ENCODE measurements at regions of chr3 and their contacts with region 1.

Region 1: DNA sequence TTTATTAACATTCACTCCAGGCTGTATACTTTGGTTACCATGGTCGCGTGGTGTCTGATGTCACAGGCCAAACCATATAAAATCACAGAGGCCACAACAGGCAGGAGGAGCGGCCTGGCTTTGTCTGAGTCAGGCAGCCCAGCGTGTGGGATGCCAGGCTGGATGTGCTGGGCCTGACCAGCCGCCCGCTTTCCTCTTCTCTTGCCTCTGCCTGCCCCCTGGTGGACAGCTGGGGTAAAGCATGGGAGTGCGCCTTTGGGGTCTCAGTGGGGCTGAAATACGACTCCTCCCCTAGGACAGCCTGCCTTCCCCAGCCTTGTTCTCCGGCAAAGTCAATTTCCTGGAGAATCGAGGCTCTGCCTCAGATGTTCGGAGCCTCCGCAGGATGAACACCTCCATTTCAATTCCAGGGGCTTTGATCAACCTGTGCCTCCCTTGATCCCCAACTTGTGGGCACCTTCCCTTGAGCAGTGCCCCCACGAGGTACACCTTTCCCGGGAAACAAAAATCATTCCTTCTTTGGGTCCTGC is 78.2 kb downstream of the CCNL1 start:
- DNase-seq: peak; percentile 85
- H3K4me3 ChIP-seq: no peak overlapping the region
- H3K27ac ChIP-seq: no peak overlapping the region
- H3K4me1 ChIP-seq: no peaks in the 10 kb centered on the region
- H3K27me3 ChIP-seq: no peaks in the 10 kb centered on the region
- CTCF ChIP-seq: peak; percentile 94 to 96
- POLR2A ChIP-seq: no peak

Region 2: DNA sequence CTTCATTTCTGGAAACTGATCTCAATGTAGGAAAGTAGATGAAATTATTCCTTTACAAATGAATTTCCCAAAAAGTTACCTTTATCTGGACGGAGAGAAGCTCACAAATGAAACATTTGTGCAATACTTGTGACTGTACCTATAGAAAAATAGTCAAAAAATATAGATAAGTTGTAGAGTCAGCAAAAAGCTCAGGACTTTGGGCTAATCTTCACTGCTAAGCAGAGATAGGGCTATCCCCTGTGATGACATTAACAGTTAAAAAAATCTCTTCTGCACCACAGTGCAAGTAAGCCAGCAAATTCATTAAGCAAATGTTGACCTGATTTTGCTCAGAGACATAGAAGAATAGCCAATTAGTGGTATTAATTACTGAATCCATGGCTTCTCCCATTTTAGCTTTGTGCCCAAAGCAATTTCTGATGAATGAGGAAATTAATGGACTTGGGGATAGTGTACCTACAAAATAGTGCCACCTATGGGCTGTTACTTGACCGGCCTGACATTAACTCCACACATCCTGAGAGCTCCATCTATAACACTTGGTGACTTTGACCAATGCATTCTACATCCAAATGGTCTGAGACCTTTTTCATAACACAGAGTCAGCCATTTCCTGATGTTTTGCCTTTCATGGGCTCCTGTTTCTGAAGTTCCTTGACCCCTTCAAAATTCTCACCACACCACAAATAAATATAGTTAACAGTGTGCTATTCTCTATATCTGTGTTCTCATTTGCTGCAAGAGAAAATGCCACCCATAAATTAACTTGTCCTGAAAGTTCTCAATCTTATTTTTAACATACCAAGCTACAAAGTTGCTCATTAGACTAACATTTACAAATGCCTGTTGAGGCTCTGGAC is 631.8 kb before region 1 on chr3:
- CTCF ChIA-PET with region 1: interaction called, 5 read pairs
- POLR2A ChIA-PET with region 1: no interaction called
- dilution Hi-C with region 1: no loop called
- intact Hi-C with region 1: loop called (anchors 2 kb)
- DNase-seq: peak; percentile 67
- H3K4me3 ChIP-seq: no peak overlapping the region
- H3K27ac ChIP-seq: no peak overlapping the region
- H3K4me1 ChIP-seq: peaks cover 5% of the 10 kb centered on the region
- H3K27me3 ChIP-seq: no peaks in the 10 kb centered on the region
- CTCF ChIP-seq: peak; percentile 58 to 59
- POLR2A ChIP-seq: no peak

Region 3: DNA sequence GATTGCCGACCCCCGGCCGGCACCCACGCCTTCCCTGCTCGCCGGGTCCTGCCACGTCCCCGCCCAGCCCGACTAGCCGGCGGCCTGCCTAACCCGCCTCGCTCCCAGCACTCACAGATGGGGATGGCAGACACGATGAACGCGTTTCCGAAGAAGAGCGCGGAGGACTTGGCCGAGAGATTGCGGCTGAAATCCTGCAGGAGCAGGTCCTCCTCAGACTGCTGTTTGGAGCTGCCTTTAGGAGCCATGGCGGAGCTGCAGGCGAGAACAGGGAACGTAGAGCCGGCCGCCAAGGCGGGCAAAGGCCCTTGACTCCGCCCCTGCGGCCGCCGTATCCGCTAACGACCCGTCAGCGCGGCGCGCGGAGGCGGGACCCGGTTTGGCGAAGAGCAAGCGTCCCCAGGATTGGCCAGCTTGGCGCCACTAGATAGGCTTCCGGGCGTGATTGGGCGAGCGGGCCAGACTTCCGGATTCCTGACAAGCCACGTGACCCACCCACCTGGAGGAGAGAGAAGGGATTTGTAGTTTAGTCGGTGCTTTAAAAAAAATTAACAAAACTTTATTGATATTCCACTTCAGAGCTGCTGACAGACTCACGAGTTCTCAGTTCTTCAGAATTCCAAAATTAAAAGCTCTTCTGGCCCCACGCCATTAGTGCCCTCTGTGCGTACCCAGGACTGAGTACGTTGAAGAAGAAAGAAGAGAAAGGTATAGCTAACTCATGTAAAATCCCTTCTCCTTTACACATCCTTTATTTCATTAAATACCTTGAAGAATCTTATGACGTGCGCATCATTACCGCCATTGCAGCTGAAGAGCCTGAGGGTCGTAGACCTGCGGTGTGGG is 526.7 kb before region 1 on chr3 and contains the start of gene SSR3:
- CTCF ChIA-PET with region 1: interaction called, 6 read pairs
- POLR2A ChIA-PET with region 1: interaction called, 3 read pairs
- dilution Hi-C with region 1: no loop called
- intact Hi-C with region 1: loop called (anchors 1 kb)
- DNase-seq: peak; percentile 99
- H3K4me3 ChIP-seq: peak within 1 kb of the TSS; percentile 79 to 97 (median 94)
- H3K27ac ChIP-seq: peak within 1 kb of the TSS; percentile 87
- H3K4me1 ChIP-seq: peaks cover 42% of the 10 kb centered on the region
- H3K27me3 ChIP-seq: no peaks in the 10 kb centered on the region
- CTCF ChIP-seq: no peak
- POLR2A ChIP-seq: peak; percentile 93
- total RNA-seq, gene SSR3: 355 and 370 TPM in 2 replicates

Region 4: GRCh38 chr3:156826144-156826895 is 255.4 kb before region 1 on chr3 and contains the start of gene LEKR1:
- CTCF ChIA-PET with region 1: no interaction called
- POLR2A ChIA-PET with region 1: no interaction called
- dilution Hi-C with region 1: no loop called
- intact Hi-C with region 1: loop called (anchors 2 kb)
- DNase-seq: peak; percentile 89
- H3K4me3 ChIP-seq: peak within 1 kb of the TSS; percentile 45 to 90 (median 55)
- H3K27ac ChIP-seq: peak within 1 kb of the TSS; percentile 100
- H3K4me1 ChIP-seq: peaks cover 20% of the 10 kb centered on the region
- H3K27me3 ChIP-seq: no peaks in the 10 kb centered on the region
- CTCF ChIP-seq: no peak
- POLR2A ChIP-seq: peak; percentile 53
- total RNA-seq, gene LEKR1: 0.21 and 0.64 TPM in 2 replicates

Region 5: GRCh38 chr3:156920399-156920798 is 161.3 kb before region 1 on chr3:
- CTCF ChIA-PET with region 1: no interaction called
- POLR2A ChIA-PET with region 1: no interaction called
- dilution Hi-C with region 1: no loop called
- intact Hi-C with region 1: no loop called
- DNase-seq: no peak
- H3K4me3 ChIP-seq: no peak overlapping the region
- H3K27ac ChIP-seq: no peak overlapping the region
- H3K4me1 ChIP-seq: no peaks in the 10 kb centered on the region
- H3K27me3 ChIP-seq: no peaks in the 10 kb centered on the region
- CTCF ChIP-seq: no peak
- POLR2A ChIP-seq: no peak

Region 6: GRCh38 chr3:157130467-157131251 is 48.9 kb after region 1 on chr3:
- CTCF ChIA-PET with region 1: interaction called, 83 read pairs
- POLR2A ChIA-PET with region 1: no interaction called
- dilution Hi-C with region 1: no loop called
- intact Hi-C with region 1: loop called (anchors 1 kb)
- DNase-seq: peak; percentile 61
- H3K4me3 ChIP-seq: no peak overlapping the region
- H3K27ac ChIP-seq: peak overlapping the region; percentile 60
- H3K4me1 ChIP-seq: peaks cover 39% of the 10 kb centered on the region
- H3K27me3 ChIP-seq: no peaks in the 10 kb centered on the region
- CTCF ChIP-seq: peak; percentile 58 to 59
- POLR2A ChIP-seq: no peak